ENCODE measurements at regions of chr7 and their contacts with region 1.

Region 1: DNA sequence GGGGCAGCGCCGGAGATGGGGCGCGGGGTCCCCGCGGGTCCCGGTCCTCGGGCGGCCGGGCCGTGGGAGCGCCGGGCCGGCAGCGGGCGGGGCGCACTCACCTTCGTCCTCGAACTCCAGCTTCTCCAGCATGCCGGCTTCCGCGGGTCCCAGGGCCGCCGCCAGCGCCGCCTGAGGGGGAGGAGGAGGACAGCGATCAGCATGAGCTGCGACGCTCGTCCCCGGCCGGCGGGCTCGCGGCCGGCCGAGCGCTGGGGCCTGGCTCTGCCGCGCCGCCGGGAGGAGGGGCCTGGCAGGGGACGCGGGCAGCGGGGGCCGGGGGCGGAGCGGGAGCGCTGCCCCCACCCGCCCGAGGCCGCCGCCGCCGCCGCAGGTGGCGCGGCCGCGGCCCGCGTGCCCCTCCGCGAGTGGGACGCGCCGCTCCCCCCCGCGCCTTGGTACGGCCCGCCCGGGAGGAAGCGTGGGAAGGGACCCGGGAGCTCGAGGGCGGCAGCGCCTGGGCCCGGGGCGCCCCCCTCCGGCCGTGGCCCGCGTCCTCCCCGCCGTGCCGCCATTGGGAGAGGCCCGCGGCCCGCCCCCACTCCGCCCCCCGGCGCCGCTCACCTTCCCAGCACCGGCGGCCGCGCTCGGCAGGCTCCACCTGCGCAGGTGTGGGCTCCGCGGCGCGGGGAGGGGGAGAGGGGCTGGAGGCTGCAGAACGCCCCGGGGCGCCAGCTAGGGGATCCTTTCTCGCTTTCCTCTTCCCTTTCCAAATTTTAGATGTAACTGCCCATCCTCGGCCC is 112.5 kb upstream of the RHEB start:
- DNase-seq: peak; percentile 83 to 90 (median 88)
- H3K4me3 ChIP-seq: peak overlapping the region; percentile 84
- H3K4me3 Mint-ChIP-seq: peak overlapping the region; percentile 95 to 100 (median 98)
- H3K27ac ChIP-seq: peak overlapping the region; percentile 68
- H3K27ac Mint-ChIP-seq: peak overlapping the region; percentile 90 to 99 (median 96)
- H3K4me1 ChIP-seq: peaks cover 21% of the 10 kb centered on the region
- H3K4me1 Mint-ChIP-seq: peaks cover 21 to 41% (median 39%) of the 10 kb centered on the region in 3 donors
- H3K27me3 ChIP-seq: no peaks in the 10 kb centered on the region
- H3K27me3 Mint-ChIP-seq: no peaks in the 10 kb centered on the region

Region 2: GRCh38 chr7:151439855-151440798 is 192.0 kb before region 1 on chr7 and contains the start of gene CRYGN:
- CTCF ChIA-PET with region 1: no interaction called
- POLR2A ChIA-PET with region 1: no interaction called
- DNase-seq: peak in 1 of 5 donors; percentile 46
- H3K4me3 ChIP-seq: no peak within 1 kb of the TSS
- H3K4me3 Mint-ChIP-seq: peak within 1 kb of the TSS in 6 of 7 donors; percentile 29 to 70 (median 57)
- H3K27ac ChIP-seq: no peak within 1 kb of the TSS
- H3K27ac Mint-ChIP-seq: peak within 1 kb of the TSS; percentile 5 to 95 (median 76)
- H3K4me1 ChIP-seq: peaks cover 28% of the 10 kb centered on the region
- H3K4me1 Mint-ChIP-seq: peaks cover 6 to 37% (median 26%) of the 10 kb centered on the region in 3 donors
- H3K27me3 ChIP-seq: no peaks in the 10 kb centered on the region
- H3K27me3 Mint-ChIP-seq: peaks cover 0 to 2% of the 10 kb centered on the region in 2 donors
- total RNA-seq, gene CRYGN: not detected

Region 3: DNA sequence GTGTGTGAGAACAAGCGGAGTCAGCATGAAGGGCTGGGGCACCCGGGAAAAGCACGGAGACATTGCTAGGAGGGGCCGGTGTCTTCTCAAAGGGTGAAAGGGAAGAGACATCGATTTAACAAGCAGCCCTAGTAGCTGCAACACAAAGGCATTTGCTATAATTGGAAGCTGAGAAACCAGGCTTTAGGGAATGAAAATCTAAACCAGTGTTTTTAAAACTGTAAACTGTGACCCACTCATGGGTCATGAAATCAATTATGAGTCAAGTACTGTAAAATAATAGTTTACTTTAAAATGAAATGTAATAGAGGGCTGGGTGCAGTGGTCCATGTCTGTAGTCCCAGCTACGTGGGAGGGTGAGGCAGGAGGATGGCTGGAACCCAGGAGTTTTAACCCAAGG is 16.3 kb after region 1 on chr7:
- CTCF ChIA-PET with region 1: no interaction called
- POLR2A ChIA-PET with region 1: no interaction called
- DNase-seq: no peak
- H3K4me3 ChIP-seq: no peak overlapping the region
- H3K4me3 Mint-ChIP-seq: no peak overlapping the region
- H3K27ac ChIP-seq: no peak overlapping the region
- H3K27ac Mint-ChIP-seq: no peak overlapping the region
- H3K4me1 ChIP-seq: no peaks in the 10 kb centered on the region
- H3K4me1 Mint-ChIP-seq: no peaks in the 10 kb centered on the region
- H3K27me3 ChIP-seq: no peaks in the 10 kb centered on the region
- H3K27me3 Mint-ChIP-seq: peaks cover 0 to 1% of the 10 kb centered on the region in 2 donors

Region 4: DNA sequence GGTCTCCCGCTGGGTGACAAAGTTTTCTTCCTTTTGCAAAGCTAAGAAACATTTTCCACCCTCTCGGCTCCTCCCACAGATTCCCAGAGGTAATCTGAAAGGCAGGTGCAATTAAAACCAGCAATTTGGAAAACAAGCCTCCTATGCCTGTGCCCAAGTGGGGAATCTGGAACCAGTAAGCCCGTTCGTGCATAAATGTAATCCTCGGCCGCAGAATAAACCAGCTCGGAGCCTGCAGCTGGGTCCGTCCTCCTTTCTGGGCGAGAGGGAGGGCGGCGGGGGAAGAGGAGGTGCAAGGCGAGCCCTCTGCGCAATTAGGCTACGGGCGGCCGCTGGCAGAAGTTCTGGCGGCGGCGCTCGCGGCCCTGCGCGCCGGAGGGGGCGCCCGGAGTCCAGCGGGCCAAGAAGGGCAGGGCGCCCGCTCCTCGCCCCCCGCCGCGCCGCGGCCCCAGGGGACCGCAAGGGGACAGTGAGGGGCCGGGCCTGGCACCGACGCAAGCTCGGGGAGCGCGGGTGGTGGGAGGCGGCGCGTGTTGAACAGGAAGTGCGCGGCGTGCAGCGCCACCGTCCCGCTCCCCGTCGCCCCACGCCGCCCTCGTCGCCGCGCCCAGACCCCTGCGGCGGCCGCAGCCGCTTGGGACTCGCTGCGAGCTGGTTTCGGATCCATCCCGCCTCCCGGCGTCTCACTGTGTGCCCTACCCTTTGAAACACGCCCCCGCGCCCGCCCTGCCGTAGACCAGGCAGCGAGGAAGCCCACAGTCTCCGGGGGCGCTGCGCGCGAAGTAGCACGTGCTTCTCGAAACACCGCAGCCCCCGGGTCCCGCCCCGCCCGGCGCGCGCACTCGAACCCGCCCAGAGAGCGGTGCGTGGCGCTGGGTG is 245.0 kb after region 1 on chr7 and contains the start of gene PRKAG2:
- CTCF ChIA-PET with region 1: no interaction called
- POLR2A ChIA-PET with region 1: interaction called, 10 read pairs
- DNase-seq: peak; percentile 58 to 86 (median 76)
- H3K4me3 ChIP-seq: peak within 1 kb of the TSS; percentile 98
- H3K4me3 Mint-ChIP-seq: peak within 1 kb of the TSS; percentile 93 to 100 (median 96)
- H3K27ac ChIP-seq: peak within 1 kb of the TSS; percentile 64
- H3K27ac Mint-ChIP-seq: peak within 1 kb of the TSS; percentile 86 to 98 (median 92)
- H3K4me1 ChIP-seq: peaks cover 12% of the 10 kb centered on the region
- H3K4me1 Mint-ChIP-seq: peaks cover 9 to 26% (median 19%) of the 10 kb centered on the region in 3 donors
- H3K27me3 ChIP-seq: no peaks in the 10 kb centered on the region
- H3K27me3 Mint-ChIP-seq: peaks cover 0 to 2% of the 10 kb centered on the region in 2 donors
- total RNA-seq, gene PRKAG2: 23.1 to 27.2 TPM

Region 5: DNA sequence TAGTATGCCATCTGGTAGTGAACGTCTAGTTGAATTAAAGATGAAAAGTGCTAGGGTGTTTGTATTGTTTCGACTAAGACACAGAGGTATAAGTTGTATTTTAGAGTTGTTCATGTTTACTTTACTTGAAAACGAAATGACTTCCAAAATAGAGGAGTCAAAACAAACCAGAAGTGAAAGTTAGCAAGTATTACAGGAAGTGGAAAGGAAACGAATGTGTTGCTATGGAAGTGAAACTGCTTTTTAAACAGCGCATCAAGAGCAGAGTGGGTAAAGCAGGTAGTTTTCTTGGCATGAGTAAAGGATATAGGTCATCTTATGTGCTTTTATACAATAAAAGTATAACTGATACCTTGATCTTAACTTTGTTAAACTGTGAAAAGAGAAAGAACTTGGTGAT is 304.0 kb after region 1 on chr7:
- CTCF ChIA-PET with region 1: no interaction called
- POLR2A ChIA-PET with region 1: no interaction called
- DNase-seq: peak in 2 of 5 donors; percentile 51 to 65
- H3K4me3 ChIP-seq: peak overlapping the region; percentile 13
- H3K4me3 Mint-ChIP-seq: peak overlapping the region; percentile 10 to 91 (median 87)
- H3K27ac ChIP-seq: no peak overlapping the region
- H3K27ac Mint-ChIP-seq: peak overlapping the region; percentile 58 to 99 (median 98)
- H3K4me1 ChIP-seq: peaks cover 16% of the 10 kb centered on the region
- H3K4me1 Mint-ChIP-seq: peaks cover 20 to 30% (median 24%) of the 10 kb centered on the region in 3 donors
- H3K27me3 ChIP-seq: no peaks in the 10 kb centered on the region
- H3K27me3 Mint-ChIP-seq: peaks cover 5 to 7% of the 10 kb centered on the region in 2 donors